ENCODE measurements at regions of chr1 and their contacts with region 1.

Region 1: GRCh38 chr1:150309770-150310508 is 11.4 kb upstream of the PRPF3 start:
- DNase-seq: no peak
- H3K4me3 ChIP-seq: no peak overlapping the region
- H3K27ac ChIP-seq: no peak overlapping the region
- H3K4me1 ChIP-seq: no peaks in the 10 kb centered on the region
- H3K27me3 ChIP-seq: no peaks in the 10 kb centered on the region
- CTCF ChIP-seq: no peak
- EP300 ChIP-seq: no peak
- POLR2A ChIP-seq: no peak
- RAD21 ChIP-seq: no peak

Region 2: DNA sequence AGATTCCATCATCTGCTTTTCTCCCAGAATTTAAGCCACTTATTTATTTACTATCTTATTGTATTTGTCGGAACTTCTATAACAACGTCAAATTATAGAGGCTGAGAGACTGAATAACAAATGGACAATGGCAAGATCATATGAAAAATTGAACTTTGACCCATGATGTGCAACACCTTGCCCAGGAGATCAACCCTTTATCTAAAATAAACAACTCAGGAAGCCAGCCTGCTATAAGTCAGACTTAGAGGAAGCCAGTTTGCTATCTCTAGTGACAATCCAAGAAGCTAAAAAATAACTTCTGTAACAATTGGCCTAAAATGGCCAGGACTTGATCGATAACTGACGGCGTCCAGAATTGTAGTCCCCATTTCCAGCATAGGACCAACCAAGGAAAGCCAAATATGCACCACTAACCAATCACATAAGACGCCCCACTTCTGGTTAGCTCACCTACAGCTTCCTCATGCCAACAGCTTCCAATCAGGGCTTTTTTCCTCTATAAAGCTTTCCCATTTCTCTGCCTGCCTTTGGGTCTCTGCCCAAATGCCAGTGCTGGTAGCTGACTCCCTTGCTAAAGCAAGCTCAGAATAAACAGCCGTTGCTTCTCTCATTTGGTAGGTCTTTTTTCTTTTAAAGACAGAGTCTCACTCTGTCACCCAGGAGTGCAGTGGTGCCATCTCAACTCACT is 102.5 kb before region 1 on chr1:
- CTCF ChIA-PET with region 1: no interaction called
- POLR2A ChIA-PET with region 1: no interaction called
- DNase-seq: no peak
- H3K4me3 ChIP-seq: no peak overlapping the region
- H3K27ac ChIP-seq: no peak overlapping the region
- H3K4me1 ChIP-seq: no peaks in the 10 kb centered on the region; a peak in 1 of 7 replicates
- H3K27me3 ChIP-seq: no peaks in the 10 kb centered on the region
- CTCF ChIP-seq: no peak
- EP300 ChIP-seq: no peak
- POLR2A ChIP-seq: no peak
- RAD21 ChIP-seq: no peak

Region 3: DNA sequence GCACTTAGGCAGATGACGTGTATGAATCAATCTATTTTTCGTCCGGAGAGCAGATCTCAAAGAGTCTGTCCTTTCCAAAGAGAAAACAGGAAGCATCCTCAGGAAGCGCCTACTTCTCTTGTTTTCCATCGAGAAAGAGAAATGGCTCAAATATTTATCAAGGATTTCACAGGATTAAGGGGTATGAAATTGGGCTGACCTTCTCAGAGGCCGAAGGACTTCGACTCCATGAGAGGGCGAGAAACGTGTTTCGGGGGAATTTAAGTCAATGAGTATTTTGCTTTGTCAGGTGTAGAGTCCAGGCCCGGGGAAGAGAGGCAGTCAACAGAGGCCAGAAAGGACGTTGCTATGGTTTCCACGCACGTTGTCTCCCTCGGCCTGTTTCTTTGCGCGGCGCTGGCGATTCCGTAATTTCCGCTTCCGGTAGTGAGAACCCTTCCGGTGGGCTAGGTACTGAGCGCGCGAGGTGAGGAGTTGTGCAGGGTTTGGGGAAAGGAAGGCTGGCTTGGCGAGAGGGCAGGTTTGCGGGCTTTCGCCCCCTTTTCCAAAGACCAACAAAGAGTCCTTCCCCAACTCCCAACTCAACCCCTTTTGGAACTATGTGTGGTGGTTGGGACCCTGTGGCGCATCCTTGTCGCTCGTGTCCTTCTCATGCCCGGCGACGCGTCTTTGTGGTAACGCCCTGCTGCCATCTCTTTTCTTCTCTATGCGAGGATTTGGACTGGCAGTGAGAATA is 16.3 kb before region 1 on chr1 and contains the start of gene MRPS21:
- CTCF ChIA-PET with region 1: no interaction called
- POLR2A ChIA-PET with region 1: interaction called, 25 read pairs
- DNase-seq: peak; percentile 70 to 88
- H3K4me3 ChIP-seq: peak within 1 kb of the TSS; percentile 79 to 100 (median 90)
- H3K27ac ChIP-seq: peak within 1 kb of the TSS; percentile 90
- H3K4me1 ChIP-seq: no peaks in the 10 kb centered on the region; a peak in 2 of 7 replicates
- H3K27me3 ChIP-seq: no peaks in the 10 kb centered on the region
- CTCF ChIP-seq: no peak
- EP300 ChIP-seq: no peak; a peak in 1 of 3 replicates
- POLR2A ChIP-seq: peak; percentile 92 to 99
- RAD21 ChIP-seq: no peak
- total RNA-seq, gene MRPS21: 99.8 and 104 TPM in 2 replicates